ENCODE measurements at regions of chr16 and their contacts with region 1.

Region 1: DNA sequence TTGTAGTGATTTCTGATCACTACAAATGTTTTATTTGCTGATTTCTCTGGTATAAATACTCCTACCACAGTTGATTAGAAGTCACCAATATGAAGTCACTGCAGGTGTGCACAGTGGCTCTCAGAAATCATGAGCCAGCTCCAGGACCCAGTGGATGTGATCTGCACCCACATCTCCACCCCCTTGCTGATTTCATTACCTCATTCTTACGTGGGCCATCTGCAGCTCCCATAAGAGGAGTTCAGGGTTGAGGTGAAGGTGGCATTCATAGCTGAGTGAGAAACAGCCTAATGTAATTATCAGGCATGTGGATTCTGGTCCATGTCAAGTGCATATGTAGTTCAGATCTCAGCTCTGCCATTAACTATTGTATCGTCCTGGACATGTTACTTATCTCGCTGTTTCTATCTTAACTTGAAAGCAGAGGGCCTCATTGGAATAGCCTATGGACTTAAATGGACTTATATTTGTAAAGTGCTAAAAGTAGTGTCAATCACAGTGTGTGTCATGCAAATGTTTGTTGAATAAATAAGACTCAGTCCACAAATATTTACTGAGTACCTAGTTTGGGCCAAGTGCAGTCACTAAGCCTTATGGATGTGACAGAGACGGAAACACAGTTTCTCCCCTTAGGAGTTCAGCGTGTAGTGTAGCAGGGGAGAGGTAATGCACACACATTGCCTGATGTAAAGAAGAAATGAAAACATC is 40.7 kb upstream of the ZKSCAN2 start:
- DNase-seq: no peak
- H3K27ac ChIP-seq: no peak overlapping the region
- CTCF ChIP-seq: no peak

Region 2: GRCh38 chr16:25270577-25270976 is 27.7 kb before region 1 on chr16:
- CTCF ChIA-PET with region 1: no interaction called
- POLR2A ChIA-PET with region 1: no interaction called
- DNase-seq: no peak
- H3K27ac ChIP-seq: no peak overlapping the region
- CTCF ChIP-seq: no peak

Region 3: DNA sequence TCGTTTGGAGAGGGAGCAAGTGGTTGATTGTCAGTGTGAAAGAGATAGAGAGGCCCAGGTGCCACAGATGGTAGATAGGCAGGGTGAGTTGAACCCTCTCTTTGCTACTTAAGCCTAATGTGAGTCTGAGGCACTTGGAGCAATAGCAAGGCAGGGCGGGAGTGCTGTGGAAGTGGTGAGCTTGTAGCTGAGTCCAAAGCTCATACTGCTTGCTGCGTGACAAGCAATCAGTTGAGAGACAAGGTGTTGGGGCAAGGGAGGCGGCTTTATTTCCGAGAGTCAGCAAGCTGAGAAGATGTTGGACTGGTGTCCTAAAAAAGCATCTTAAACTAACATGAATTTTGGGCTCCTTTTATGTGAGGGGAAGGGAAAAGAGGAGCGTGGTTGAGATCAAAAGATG is 72.2 kb after region 1 on chr16:
- CTCF ChIA-PET with region 1: no interaction called
- POLR2A ChIA-PET with region 1: interaction called, 10 read pairs
- DNase-seq: no peak
- H3K27ac ChIP-seq: no peak overlapping the region
- CTCF ChIP-seq: no peak